Right ventricle myocardium superior (tissue), 1 donor: ENCODE measurements at regions of chr4 and their contacts with region 1.

Region 1: DNA sequence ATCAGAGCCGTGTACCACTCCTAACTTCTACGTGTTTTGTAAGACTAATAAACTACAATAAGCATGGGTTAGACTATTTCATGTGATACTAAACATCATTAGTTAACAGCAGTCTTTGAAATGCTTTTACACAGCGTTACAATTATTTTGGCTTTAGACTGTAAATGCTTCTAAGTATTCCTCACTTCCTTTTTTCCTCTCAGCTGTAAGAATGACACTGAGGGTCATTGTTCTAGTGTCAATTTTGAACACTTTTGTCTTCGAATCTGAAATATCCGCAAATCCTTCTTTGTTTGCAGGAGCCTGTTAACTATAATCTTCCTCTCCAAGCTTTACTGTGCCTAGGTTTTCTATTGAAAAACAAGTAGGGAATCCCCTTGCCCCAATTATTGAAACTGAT is 1.5 kb downstream of the ABCE1 start:
- DNase-seq: no peak
- ATAC-seq: no peak

Region 2: GRCh38 chr4:143539670-143540023 is 1560.0 kb before region 1 on chr4:
- intact Hi-C with region 1: loop called (anchors 10 kb)
- DNase-seq: no peak
- ATAC-seq: no peak

Region 3: GRCh38 chr4:144831971-144832370 is 267.7 kb before region 1 on chr4:
- intact Hi-C with region 1: no loop called
- DNase-seq: no peak
- ATAC-seq: no peak